MCF 10A (cell line): ENCODE measurements at regions of chr12 and their contacts with region 1.

Region 1: GRCh38 chr12:132710422-132711168 is at the start of gene PGAM5:
- DNase-seq: peak; percentile 79
- H3K4me3 Mint-ChIP-seq: peak within 1 kb of the TSS; percentile 93
- H3K27ac Mint-ChIP-seq: peak within 1 kb of the TSS; percentile 91
- H3K4me1 Mint-ChIP-seq: no peaks in the 10 kb centered on the region
- H3K27me3 Mint-ChIP-seq: no peaks in the 10 kb centered on the region
- CTCF ChIP-seq: no peak
- total RNA-seq, gene PGAM5: 69.8 and 84.0 TPM in 2 replicates

Region 2: GRCh38 chr12:132828706-132829534 is 118.3 kb after region 1 on chr12 and contains the start of gene GOLGA3:
- CTCF ChIA-PET with region 1: no interaction called
- POLR2A ChIA-PET with region 1: interaction called, 16 read pairs
- intact Hi-C with region 1: no loop called
- DNase-seq: peak; percentile 91
- H3K4me3 Mint-ChIP-seq: peak within 1 kb of the TSS; percentile 94
- H3K27ac Mint-ChIP-seq: peak within 1 kb of the TSS; percentile 100
- H3K4me1 Mint-ChIP-seq: peaks cover 10% of the 10 kb centered on the region
- H3K27me3 Mint-ChIP-seq: no peaks in the 10 kb centered on the region
- CTCF ChIP-seq: no peak
- total RNA-seq, gene GOLGA3: 94.9 and 116 TPM in 2 replicates